ENCODE measurements at regions of chr1 and their contacts with region 1.

Region 1: GRCh38 chr1:61337981-61338848 is 255.9 kb downstream of the NFIA start:
- DNase-seq: peak; percentile 93
- H3K4me3 ChIP-seq: peak overlapping the region in 1 of 3 experiments; percentile 49
- H3K27ac ChIP-seq: peak overlapping the region; percentile 93
- H3K4me1 ChIP-seq: peaks cover 27% of the 10 kb centered on the region
- H3K27me3 ChIP-seq: no peaks in the 10 kb centered on the region
- CTCF ChIP-seq: peak; percentile 71 to 77
- POLR2A ChIP-seq: no peak

Region 2: GRCh38 chr1:59971464-59971911 is 1366.7 kb before region 1 on chr1:
- CTCF ChIA-PET with region 1: interaction called, 4 read pairs
- POLR2A ChIA-PET with region 1: no interaction called
- dilution Hi-C with region 1: no loop called
- intact Hi-C with region 1: loop called (anchors 10 kb)
- DNase-seq: peak; percentile 63
- H3K4me3 ChIP-seq: no peak overlapping the region
- H3K27ac ChIP-seq: no peak overlapping the region
- H3K4me1 ChIP-seq: peaks cover 2% of the 10 kb centered on the region
- H3K27me3 ChIP-seq: peaks cover 0 to 11% of the 10 kb centered on the region in 2 experiments
- CTCF ChIP-seq: peak; percentile 83 to 91
- POLR2A ChIP-seq: no peak

Region 3: DNA sequence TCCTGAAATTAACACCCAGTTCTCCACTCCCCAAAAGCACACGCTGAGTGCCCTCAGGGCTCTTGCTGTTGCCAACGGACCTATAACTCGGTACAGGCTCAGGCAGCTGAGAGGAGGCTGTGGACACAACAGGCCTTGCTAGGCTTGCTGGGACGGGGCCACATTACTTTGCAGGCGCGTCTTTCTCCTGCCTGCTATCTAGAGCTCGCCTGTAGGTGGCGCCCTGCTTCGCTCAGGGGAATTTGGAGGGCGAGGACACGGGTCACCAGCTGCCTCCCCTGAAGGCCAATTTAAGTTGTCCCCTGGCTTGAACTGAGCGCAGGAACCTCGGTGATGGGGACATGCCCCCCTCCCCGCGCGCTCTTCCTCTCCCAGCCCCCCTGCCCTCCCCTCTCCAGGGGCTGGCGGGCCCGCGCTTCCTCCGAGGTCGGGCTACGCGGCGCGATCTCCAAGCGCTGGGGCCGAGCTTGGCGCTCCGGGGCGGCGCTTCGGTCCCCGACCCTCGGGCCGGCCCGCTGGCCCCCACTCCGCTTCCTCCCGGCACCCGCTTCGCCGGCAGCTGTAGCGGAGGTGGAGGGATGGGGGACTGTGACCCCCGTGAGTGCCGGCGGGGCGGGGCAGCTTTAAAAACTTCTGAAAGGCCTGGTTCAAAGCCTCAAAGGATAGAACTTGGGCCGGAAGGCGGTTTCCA is 288.2 kb before region 1 on chr1:
- CTCF ChIA-PET with region 1: interaction called, 40 read pairs
- POLR2A ChIA-PET with region 1: no interaction called
- dilution Hi-C with region 1: no loop called
- intact Hi-C with region 1: loop called (anchors 1 kb)
- DNase-seq: peak; percentile 93
- H3K4me3 ChIP-seq: peak overlapping the region; percentile 62 to 95 (median 92)
- H3K27ac ChIP-seq: peak overlapping the region; percentile 84
- H3K4me1 ChIP-seq: peaks cover 16% of the 10 kb centered on the region
- H3K27me3 ChIP-seq: no peaks in the 10 kb centered on the region
- CTCF ChIP-seq: peak; percentile 89 to 96
- POLR2A ChIP-seq: peak; percentile 40

Region 4: DNA sequence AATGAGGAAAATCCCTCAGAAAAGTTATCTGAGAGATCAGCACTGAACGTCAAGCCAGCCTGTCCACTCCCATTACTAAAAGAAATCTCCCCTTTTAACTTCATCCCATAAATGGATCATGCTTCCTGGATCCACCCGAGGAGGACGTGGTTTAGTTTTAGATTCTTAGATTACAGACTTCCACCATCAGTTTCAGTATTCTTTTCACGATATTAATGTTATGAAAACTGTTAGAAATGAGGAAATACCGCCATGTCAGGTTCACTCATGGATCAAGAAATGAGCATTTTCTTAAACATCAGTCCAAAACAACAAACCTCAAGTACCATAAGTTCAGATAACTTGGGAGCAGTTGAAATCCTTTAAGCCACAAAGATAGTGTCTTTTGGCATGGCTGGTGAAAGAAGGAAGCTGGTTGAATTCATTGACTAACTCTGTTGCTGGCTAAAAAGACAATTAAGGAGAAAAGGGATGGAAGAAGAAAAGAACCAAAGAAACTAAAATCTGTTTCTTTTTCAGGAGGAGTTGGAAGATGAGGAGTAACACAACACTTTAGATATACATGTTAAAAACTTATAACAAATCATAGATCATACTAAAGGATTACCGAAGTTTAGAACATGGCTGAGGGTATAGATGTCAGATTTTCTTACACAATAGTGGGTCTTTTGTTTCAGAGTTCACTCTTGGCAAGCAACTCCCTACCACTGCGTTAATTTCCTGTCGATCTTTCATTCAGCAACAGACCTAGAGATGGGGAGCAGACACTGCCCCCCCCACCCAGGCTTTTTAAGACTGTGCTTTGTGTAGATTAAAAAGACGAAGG is 205.8 kb before region 1 on chr1:
- CTCF ChIA-PET with region 1: no interaction called
- POLR2A ChIA-PET with region 1: no interaction called
- dilution Hi-C with region 1: no loop called
- intact Hi-C with region 1: loop called (anchors 1 kb)
- DNase-seq: peak; percentile 91
- H3K4me3 ChIP-seq: peak overlapping the region in 1 of 3 experiments; percentile 53
- H3K27ac ChIP-seq: peak overlapping the region; percentile 75
- H3K4me1 ChIP-seq: peaks cover 23% of the 10 kb centered on the region
- H3K27me3 ChIP-seq: no peaks in the 10 kb centered on the region
- CTCF ChIP-seq: no peak
- POLR2A ChIP-seq: no peak

Region 5: DNA sequence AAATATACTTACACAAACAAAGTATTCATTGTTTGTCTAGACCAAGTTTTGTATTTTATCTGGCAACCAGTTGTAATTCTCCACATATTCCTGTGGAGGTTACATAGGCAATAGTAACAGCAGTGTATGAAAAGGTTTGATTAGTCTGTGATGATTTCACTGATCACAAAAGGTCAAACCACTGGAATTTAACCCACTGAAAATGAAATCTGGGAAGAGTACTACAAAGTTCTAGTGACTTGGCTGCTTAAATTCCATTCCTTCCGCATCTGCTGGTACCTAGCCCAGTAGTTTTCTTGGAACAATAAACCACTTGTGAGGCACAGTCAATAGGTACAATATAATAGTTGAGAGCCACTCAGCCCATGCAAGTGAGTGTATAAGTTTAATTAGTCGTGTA is 50.5 kb before region 1 on chr1:
- CTCF ChIA-PET with region 1: no interaction called
- POLR2A ChIA-PET with region 1: no interaction called
- dilution Hi-C with region 1: no loop called
- intact Hi-C with region 1: loop called (anchors 1 kb)
- DNase-seq: peak; percentile 90
- H3K4me3 ChIP-seq: no peak overlapping the region
- H3K27ac ChIP-seq: peak overlapping the region; percentile 87
- H3K4me1 ChIP-seq: peaks cover 29% of the 10 kb centered on the region
- H3K27me3 ChIP-seq: no peaks in the 10 kb centered on the region
- CTCF ChIP-seq: no peak
- POLR2A ChIP-seq: no peak

Region 6: GRCh38 chr1:61588736-61589672 is 250.8 kb after region 1 on chr1:
- CTCF ChIA-PET with region 1: interaction called, 17 read pairs
- POLR2A ChIA-PET with region 1: no interaction called
- dilution Hi-C with region 1: no loop called
- intact Hi-C with region 1: loop called (anchors 1 kb)
- DNase-seq: peak; percentile 69
- H3K4me3 ChIP-seq: no peak overlapping the region
- H3K27ac ChIP-seq: no peak overlapping the region
- H3K4me1 ChIP-seq: no peaks in the 10 kb centered on the region
- H3K27me3 ChIP-seq: peaks cover 0 to 2% of the 10 kb centered on the region in 2 experiments
- CTCF ChIP-seq: peak; percentile 83 to 86
- POLR2A ChIP-seq: no peak

Measured in endothelial cell of umbilical vein (primary cell).